Aorta (tissue), 5 donors: ENCODE measurements at regions of chr1 and their contacts with region 1.

Region 1: DNA sequence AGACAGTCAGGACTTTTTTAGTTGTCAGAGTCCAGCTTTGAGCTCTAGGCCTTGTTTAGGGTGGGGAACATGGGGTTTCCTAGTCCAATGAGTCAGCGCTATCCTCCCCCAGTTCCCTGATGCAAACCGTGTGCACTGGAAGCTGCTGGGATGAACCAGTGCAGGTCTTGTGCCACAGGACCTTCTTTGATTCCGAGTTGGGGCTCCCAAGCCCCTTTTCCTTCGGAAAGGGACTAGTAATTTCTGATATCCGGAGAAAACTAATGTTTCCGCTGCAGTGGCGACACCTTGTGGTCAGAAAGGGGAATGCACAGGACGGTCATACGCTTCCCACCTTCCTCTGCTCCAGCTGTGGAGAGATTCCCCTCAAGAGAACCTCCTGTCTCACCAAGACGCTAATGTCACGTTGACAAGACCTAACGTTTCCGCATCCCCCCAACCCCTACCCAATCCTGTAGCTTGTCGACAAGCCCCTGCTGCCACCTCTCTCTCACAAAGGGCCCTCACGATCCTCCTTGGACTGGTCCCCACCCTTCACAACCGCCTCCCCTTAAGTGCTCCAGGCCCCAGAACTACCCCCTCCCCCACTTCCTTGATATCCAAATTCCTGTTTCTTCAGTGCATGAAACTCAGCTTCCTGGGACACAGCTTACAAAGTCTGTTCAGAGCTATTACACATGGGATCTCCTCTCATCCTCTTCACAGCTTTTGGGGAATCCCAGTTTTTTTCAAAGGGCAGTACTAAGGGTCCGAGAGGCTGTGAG is 30.9 kb downstream of the GPA33 start:
- DNase-seq: peak; percentile 76 to 89
- ATAC-seq: peak; percentile 84
- H3K4me3 ChIP-seq: no peak overlapping the region
- H3K27ac ChIP-seq: no peak overlapping the region
- H3K4me1 ChIP-seq: no peaks in the 10 kb centered on the region
- H3K27me3 ChIP-seq: no peaks in the 10 kb centered on the region

Region 2: GRCh38 chr1:166884040-166884642 is 175.1 kb before region 1 on chr1:
- intact Hi-C with region 1: loop called (anchors 1 to 5 kb)
- DNase-seq: peak; percentile 61 to 83
- ATAC-seq: peak; percentile 75
- H3K4me3 ChIP-seq: no peak overlapping the region
- H3K27ac ChIP-seq: no peak overlapping the region
- H3K4me1 ChIP-seq: no peaks in the 10 kb centered on the region
- H3K27me3 ChIP-seq: no peaks in the 10 kb centered on the region

Region 3: GRCh38 chr1:166910396-166910994 is 148.7 kb before region 1 on chr1:
- intact Hi-C with region 1: loop called (anchors 5 kb)
- DNase-seq: peak in 1 of 2 donors; percentile 62
- ATAC-seq: peak; percentile 68
- H3K4me3 ChIP-seq: no peak overlapping the region
- H3K27ac ChIP-seq: no peak overlapping the region
- H3K4me1 ChIP-seq: no peaks in the 10 kb centered on the region
- H3K27me3 ChIP-seq: no peaks in the 10 kb centered on the region

Region 4: GRCh38 chr1:166975361-166976129 is 83.7 kb before region 1 on chr1 and contains the start of gene ILDR2:
- intact Hi-C with region 1: loop called in 1 of 2 experiments (anchors 10 kb)
- DNase-seq: peak; percentile 53 to 86
- ATAC-seq: peak; percentile 64
- H3K4me3 ChIP-seq: peak within 1 kb of the TSS; percentile 90 to 98
- H3K27ac ChIP-seq: no peak within 1 kb of the TSS
- H3K4me1 ChIP-seq: no peaks in the 10 kb centered on the region
- H3K27me3 ChIP-seq: no peaks in the 10 kb centered on the region
- total RNA-seq, gene ILDR2: 0.42 to 0.66 TPM

Region 5: DNA sequence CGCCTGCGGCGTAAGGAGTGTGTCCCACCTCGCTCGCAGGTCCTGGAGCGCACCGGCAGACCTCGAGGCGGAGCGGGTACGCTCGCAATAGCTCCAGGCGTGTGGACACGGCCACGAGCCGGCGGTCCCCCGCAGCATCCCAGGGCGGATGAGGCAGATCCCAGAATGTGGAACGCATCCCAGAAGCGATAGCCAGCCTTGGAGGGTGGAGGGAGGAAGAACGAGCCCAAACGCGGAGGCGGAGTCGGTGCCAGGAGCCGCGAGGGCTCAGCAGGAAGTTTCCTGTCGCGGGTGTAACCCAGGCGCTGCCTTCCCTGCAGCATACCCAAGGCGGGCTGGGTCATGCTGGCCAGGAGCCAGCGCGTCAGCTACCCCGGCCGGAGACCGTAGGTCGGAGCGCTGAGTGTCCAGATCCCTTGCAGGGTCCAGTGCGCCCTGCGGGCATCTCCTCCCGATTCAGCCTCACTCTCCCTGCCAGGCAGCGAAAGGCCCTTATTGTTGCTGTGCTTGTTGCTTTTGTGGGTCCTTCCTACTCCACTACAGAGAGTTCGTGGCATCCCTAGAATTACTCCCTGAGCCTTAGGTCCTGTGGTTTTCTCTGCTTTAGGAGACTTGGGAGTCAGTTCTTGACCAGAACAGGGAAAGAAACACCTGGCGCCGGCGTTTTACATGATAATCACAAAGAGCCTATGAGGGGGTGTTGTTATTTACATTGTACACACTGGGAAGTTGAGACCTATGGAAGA is 62.3 kb after region 1 on chr1:
- intact Hi-C with region 1: no loop called
- DNase-seq: peak; percentile 62 to 81
- ATAC-seq: peak; percentile 74
- H3K4me3 ChIP-seq: no peak overlapping the region
- H3K27ac ChIP-seq: no peak overlapping the region
- H3K4me1 ChIP-seq: no peaks in the 10 kb centered on the region
- H3K27me3 ChIP-seq: no peaks in the 10 kb centered on the region

Region 6: DNA sequence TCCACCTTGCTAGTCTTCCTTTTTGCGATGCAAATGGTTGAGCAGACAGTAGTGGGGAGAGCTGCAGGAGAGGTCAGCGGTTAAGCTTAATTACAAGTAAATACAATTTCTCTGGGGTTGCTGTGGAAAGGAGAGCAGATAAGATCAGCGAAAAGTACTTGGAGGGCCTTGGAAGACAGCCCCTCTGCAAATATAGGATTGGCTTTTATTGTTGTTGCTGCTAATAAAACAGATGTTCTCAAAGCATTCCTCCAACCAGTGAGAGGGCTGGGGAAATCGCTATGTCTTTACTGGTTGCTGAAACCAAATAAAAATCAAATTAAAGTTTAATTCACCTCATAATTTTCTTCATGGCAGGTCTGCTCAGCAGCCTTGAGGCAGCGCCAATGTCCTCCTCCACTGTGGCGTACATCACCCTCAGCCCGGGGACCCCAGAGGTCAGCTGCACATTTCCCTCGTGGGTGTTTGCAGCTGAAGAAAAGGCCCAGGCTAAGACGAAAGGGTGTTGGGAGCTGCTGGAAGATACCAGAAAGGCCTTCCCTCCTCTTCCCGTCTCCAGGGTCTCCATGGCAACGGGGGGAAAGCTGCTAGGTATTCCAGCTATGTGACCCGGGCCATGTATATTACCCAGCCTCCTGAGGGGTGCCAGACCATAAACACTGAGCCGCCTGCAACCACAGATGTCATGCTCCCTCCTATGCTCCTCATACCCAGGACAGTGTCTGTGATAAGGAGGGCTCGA is 106.9 kb after region 1 on chr1:
- intact Hi-C with region 1: no loop called
- DNase-seq: no peak
- ATAC-seq: no peak
- H3K4me3 ChIP-seq: no peak overlapping the region
- H3K27ac ChIP-seq: no peak overlapping the region
- H3K4me1 ChIP-seq: no peaks in the 10 kb centered on the region
- H3K27me3 ChIP-seq: no peaks in the 10 kb centered on the region